ENCODE measurements at regions of chr4 and their contacts with region 1.

Region 1: DNA sequence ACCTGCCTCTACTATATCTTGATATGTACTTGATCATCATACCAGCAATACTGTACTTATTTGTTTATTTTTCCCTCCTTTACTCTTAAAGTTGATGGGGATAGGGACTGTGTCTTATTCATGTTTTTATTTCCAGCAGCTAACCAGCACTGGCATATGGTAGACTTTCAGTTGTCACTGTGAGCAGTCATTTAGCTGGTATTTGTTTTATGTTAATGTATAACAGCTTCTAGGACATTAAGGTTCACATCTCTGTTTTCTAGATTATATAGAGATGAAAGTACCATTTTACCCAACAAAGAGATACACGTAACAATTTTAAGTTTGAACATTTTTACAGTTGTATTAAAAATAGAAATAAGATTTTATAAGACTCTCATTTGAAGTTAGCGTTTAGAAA is 17.9 kb downstream of the METTL14 start:
- DNase-seq: no peak
- ATAC-seq: no peak
- H3K4me3 ChIP-seq: no peak overlapping the region
- H3K27ac ChIP-seq: no peak overlapping the region
- H3K4me1 ChIP-seq: no peaks in the 10 kb centered on the region
- H3K27me3 ChIP-seq: no peaks in the 10 kb centered on the region
- CTCF ChIP-seq: no peak
- EP300 ChIP-seq: no peak
- POLR2A ChIP-seq: no peak
- RAD21 ChIP-seq: no peak

Region 2: GRCh38 chr4:118765399-118765798 is 62.3 kb after region 1 on chr4:
- CTCF ChIA-PET with region 1: no interaction called
- POLR2A ChIA-PET with region 1: no interaction called
- RAD21 ChIA-PET with region 1: no interaction called
- SMC1A ChIA-PET with region 1: no interaction called
- in situ Hi-C with region 1: loop called (anchors 10 kb)
- intact Hi-C with region 1: no loop called
- DNase-seq: no peak
- ATAC-seq: no peak
- H3K4me3 ChIP-seq: no peak overlapping the region
- H3K27ac ChIP-seq: no peak overlapping the region
- H3K4me1 ChIP-seq: peaks cover 5% of the 10 kb centered on the region; the same call in 1 of the 2 replicates
- H3K27me3 ChIP-seq: no peaks in the 10 kb centered on the region
- CTCF ChIP-seq: no peak
- EP300 ChIP-seq: no peak
- POLR2A ChIP-seq: no peak
- RAD21 ChIP-seq: no peak

Region 3: GRCh38 chr4:118826723-118827444 is 123.8 kb after region 1 on chr4:
- CTCF ChIA-PET with region 1: no interaction called
- POLR2A ChIA-PET with region 1: no interaction called
- RAD21 ChIA-PET with region 1: no interaction called
- SMC1A ChIA-PET with region 1: no interaction called
- in situ Hi-C with region 1: no loop called
- intact Hi-C with region 1: no loop called
- DNase-seq: no peak
- ATAC-seq: peak; percentile 59
- H3K4me3 ChIP-seq: peak overlapping the region; percentile 35
- H3K27ac ChIP-seq: 0 out of 2 replicates have a peak overlapping the region, but pooled peaks have one; percentile 2
- H3K4me1 ChIP-seq: peaks cover 18% of the 10 kb centered on the region
- H3K27me3 ChIP-seq: no peaks in the 10 kb centered on the region
- CTCF ChIP-seq: no peak
- EP300 ChIP-seq: no peak
- POLR2A ChIP-seq: no peak
- RAD21 ChIP-seq: no peak

Measured in GM12878 (cell line).